IMR-90 (cell line): ENCODE measurements at regions of chr6 and their contacts with region 1.

Region 1: DNA sequence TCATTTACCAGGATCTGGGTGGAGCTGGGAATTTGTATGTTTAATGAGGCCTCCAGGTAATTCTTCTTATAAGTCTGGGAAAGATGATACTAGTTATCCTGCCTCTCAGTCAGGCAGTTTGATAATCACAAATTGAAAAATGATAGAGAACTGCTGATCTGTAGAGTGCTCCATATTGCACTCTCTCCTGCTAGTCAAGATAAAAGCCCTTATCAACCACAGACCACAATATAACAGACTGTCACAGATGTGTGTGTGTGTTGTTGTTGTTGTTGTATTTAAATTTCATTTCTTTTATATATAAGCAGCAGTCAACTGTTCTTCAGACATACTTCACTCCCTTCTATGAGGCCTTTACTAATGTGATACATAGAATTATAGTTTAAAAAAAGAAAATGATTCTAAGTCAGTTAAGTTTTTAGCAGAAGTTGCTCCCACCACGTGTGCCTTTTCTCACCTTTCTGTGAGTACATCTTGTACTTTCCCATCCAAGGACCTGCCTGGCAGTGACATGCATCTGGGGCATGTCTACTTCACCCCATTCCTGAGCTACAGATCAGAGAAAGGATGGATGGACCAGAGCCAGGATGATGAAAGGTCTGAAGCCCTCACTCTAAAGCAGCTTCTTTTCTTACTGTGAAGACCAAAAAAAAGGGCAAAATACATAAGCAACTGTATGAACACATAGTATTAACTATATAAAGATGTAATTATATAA is 29.8 kb downstream of the TENT5A start:
- DNase-seq: no peak
- ATAC-seq: no peak
- H3K4me3 ChIP-seq: no peak overlapping the region
- H3K27ac ChIP-seq: no peak overlapping the region
- H3K4me1 ChIP-seq: no peaks in the 10 kb centered on the region
- H3K27me3 ChIP-seq: no peaks in the 10 kb centered on the region
- CTCF ChIP-seq: no peak
- POLR2A ChIP-seq: no peak
- RAD21 ChIP-seq: no peak

Region 2: GRCh38 chr6:81640126-81640525 is 82.5 kb before region 1 on chr6:
- CTCF ChIA-PET with region 1: no interaction called
- POLR2A ChIA-PET with region 1: no interaction called
- dilution Hi-C with region 1: no loop called
- in situ Hi-C with region 1: no loop called
- intact Hi-C with region 1: loop called (anchors 5 kb)
- DNase-seq: no peak
- ATAC-seq: no peak
- H3K4me3 ChIP-seq: no peak overlapping the region
- H3K27ac ChIP-seq: no peak overlapping the region
- H3K4me1 ChIP-seq: no peaks in the 10 kb centered on the region; the same call in 1 of the 2 replicates
- H3K27me3 ChIP-seq: no peaks in the 10 kb centered on the region
- CTCF ChIP-seq: no peak
- POLR2A ChIP-seq: no peak
- RAD21 ChIP-seq: no peak

Region 3: GRCh38 chr6:81787313-81788068 is 64.8 kb after region 1 on chr6:
- CTCF ChIA-PET with region 1: no interaction called
- POLR2A ChIA-PET with region 1: no interaction called
- dilution Hi-C with region 1: no loop called
- in situ Hi-C with region 1: no loop called
- intact Hi-C with region 1: no loop called
- DNase-seq: peak; percentile 74
- ATAC-seq: peak; percentile 95
- H3K4me3 ChIP-seq: no peak overlapping the region
- H3K27ac ChIP-seq: no peak overlapping the region
- H3K4me1 ChIP-seq: peaks cover 3% of the 10 kb centered on the region; the same call in 1 of the 2 replicates
- H3K27me3 ChIP-seq: no peaks in the 10 kb centered on the region
- CTCF ChIP-seq: no peak
- POLR2A ChIP-seq: no peak
- RAD21 ChIP-seq: no peak